Left colon (tissue), 2 donors: ENCODE measurements at regions of chr18 and their contacts with region 1.

Region 1: GRCh38 chr18:62249478-62250097 is 62.5 kb downstream of the RELCH start:
- DNase-seq: peak; percentile 68 to 91
- ATAC-seq: peak; percentile 79

Region 2: DNA sequence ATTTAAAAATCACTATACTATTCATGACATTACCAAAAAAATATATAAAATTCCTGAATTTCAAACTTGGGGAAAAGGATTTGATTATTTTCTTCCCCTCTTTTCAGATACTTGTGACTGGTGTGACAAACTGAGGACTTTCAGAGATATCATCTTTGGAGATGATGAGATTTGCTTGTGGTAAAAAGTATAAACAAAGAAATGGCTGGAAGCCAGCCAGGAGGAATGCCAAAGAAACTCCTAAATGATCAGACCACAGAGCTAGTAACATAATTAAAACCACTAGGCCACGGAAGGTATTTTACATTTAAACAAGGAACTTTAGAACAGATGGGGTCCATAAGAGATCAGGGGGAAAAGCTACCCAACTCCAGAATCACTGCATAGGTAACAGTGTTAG is 121.4 kb before region 1 on chr18:
- intact Hi-C with region 1: no loop called
- DNase-seq: no peak
- ATAC-seq: no peak

Region 3: DNA sequence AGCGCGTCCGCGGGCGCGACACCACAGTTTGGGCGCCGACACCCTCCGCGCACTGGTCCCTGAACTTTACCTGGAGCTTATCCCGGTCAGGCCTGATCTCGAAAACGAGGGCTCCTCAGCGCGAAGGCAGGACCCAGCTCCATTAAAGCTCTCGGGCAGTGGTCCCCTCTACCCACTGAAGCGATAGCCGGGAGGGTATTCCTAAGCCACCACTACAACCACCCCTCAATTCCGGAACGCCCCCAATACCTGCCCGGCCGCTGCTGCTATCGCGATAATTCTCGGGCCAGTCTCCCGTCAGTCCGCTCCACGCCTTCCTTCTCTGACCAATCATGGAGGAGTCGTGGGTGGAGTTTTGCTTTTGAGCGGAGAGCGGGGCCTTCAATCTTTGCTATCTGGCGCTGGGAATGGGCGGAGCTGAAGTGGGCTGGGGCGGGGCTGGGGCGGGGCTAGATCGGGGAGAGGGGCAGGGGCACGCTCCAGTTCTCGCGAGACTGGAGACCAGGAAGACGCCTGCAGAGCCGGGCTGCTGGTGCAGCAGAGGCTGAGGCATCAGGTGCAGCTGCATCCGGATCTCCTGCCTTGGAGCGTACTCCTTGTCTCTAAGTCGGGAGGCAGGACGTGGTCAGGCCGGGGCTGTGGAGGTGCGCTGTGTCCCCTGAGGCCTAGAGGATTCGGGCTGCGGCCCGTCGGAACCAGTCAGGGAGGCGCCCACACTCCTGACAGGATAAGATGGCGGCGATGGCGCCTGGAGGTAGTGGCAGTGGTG is 62.6 kb before region 1 on chr18 and contains the starts of genes PIGN and RELCH:
- intact Hi-C with region 1: loop called (anchors 2 to 5 kb)
- DNase-seq: peak; percentile 93 to 98
- ATAC-seq: peak; percentile 86
- total RNA-seq, gene PIGN: 35.7 to 46.6 TPM
- total RNA-seq, gene RELCH: 46.9 to 61.1 TPM

Region 4: DNA sequence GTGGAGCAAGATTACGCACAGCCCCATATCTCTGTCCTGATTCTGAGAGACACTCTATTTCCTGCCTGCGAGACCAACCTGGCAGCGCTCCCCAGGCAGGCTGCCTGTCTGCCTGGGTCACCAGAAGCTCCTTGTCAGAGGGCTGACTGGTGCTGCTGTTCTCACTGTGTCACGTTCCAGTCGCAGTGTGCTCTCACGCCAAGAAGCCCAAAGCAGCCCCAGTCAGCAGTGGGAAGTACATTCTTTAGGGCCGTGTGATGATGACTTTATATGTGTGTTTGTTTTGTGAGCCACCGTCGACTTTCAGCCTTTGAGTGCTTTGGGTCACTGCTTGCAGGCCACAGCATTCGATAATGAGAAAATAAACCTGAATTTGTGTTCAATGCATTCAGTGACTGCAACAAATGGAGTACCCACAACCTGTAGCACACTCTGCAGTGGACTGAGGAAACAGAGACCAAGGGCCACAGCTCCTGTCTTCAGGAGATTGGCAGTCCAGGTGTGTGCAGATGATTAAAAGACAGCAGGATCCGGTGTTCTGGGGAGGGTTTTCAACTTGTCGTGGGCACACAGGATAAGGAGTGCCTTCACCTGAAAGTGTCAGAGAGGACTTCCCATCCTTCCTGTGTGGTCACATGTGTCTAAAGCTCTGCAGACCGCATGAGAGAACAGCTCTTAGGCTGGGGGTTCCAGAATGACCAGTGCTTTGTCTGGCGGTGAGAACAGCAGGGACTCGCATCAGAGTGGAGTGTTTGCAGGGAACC is 80.3 kb after region 1 on chr18:
- intact Hi-C with region 1: no loop called
- DNase-seq: peak; percentile 62 to 63
- ATAC-seq: peak; percentile 46